Caco-2 (cell line): ENCODE measurements at regions of chr11 and their contacts with region 1.

Region 1: GRCh38 chr11:121655537-121656327 is 203.0 kb upstream of the SORL1-AS1 start:
- DNase-seq: peak; percentile 83 to 92
- H3K4me3 ChIP-seq: peak overlapping the region; percentile 37
- H3K4me3 Mint-ChIP-seq: peak overlapping the region; percentile 72
- H3K27ac Mint-ChIP-seq: peak overlapping the region; percentile 8
- H3K4me1 ChIP-seq: peaks cover 12% of the 10 kb centered on the region; the same call in 1 of the 2 replicates
- H3K4me1 Mint-ChIP-seq: no peaks in the 10 kb centered on the region
- H3K27me3 ChIP-seq: no peaks in the 10 kb centered on the region
- H3K27me3 Mint-ChIP-seq: peaks cover 25% of the 10 kb centered on the region
- CTCF ChIP-seq: peak; percentile 87 to 99

Region 2: DNA sequence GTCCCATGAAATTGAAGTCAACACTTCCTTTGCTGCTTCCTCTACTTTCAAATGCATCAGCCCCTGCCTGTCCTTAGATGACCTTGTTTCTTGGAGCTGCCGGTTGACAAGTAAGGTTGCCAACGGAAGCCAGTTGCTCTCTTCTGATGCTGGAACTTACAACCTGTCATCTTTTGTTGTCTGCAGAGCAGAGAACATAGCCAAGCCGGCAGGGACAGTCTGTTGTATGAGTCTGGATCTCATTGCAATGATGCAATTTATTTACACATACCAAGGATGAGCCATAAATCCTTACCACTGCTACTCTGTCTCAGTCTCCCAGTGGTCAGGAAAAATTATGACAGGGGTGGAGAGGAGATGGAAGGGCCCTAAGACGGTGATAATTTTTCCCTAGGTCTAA is 308.9 kb after region 1 on chr11:
- CTCF ChIA-PET with region 1: no interaction called
- POLR2A ChIA-PET with region 1: no interaction called
- intact Hi-C with region 1: loop called (anchors 1 kb)
- DNase-seq: peak in 1 of 2 experiments; percentile 14
- H3K4me3 ChIP-seq: no peak overlapping the region
- H3K4me3 Mint-ChIP-seq: no peak overlapping the region
- H3K27ac Mint-ChIP-seq: no peak overlapping the region
- H3K4me1 ChIP-seq: no peaks in the 10 kb centered on the region
- H3K4me1 Mint-ChIP-seq: no peaks in the 10 kb centered on the region
- H3K27me3 ChIP-seq: no peaks in the 10 kb centered on the region
- H3K27me3 Mint-ChIP-seq: peaks cover 12% of the 10 kb centered on the region
- CTCF ChIP-seq: no peak

Region 3: GRCh38 chr11:122101625-122102291 is 446.0 kb after region 1 on chr11:
- CTCF ChIA-PET with region 1: no interaction called
- POLR2A ChIA-PET with region 1: no interaction called
- intact Hi-C with region 1: loop called (anchors 1 kb)
- DNase-seq: peak in 1 of 2 experiments; percentile 24
- H3K4me3 ChIP-seq: no peak overlapping the region
- H3K4me3 Mint-ChIP-seq: no peak overlapping the region
- H3K27ac Mint-ChIP-seq: no peak overlapping the region
- H3K4me1 ChIP-seq: no peaks in the 10 kb centered on the region
- H3K4me1 Mint-ChIP-seq: no peaks in the 10 kb centered on the region
- H3K27me3 ChIP-seq: peaks cover 2% of the 10 kb centered on the region
- H3K27me3 Mint-ChIP-seq: peaks cover 37% of the 10 kb centered on the region
- CTCF ChIP-seq: peak in 1 of 2 experiments; percentile 34

Region 4: GRCh38 chr11:122202951-122203456 is 547.3 kb after region 1 on chr11:
- CTCF ChIA-PET with region 1: interaction called, 11 read pairs
- POLR2A ChIA-PET with region 1: no interaction called
- intact Hi-C with region 1: loop called (anchors 1 kb)
- DNase-seq: peak; percentile 59 to 82
- H3K4me3 ChIP-seq: no peak overlapping the region
- H3K4me3 Mint-ChIP-seq: peak overlapping the region; percentile 43
- H3K27ac Mint-ChIP-seq: no peak overlapping the region
- H3K4me1 ChIP-seq: peaks cover 9% of the 10 kb centered on the region
- H3K4me1 Mint-ChIP-seq: peaks cover 9% of the 10 kb centered on the region
- H3K27me3 ChIP-seq: peaks cover 2% of the 10 kb centered on the region
- H3K27me3 Mint-ChIP-seq: peaks cover 29% of the 10 kb centered on the region
- CTCF ChIP-seq: peak; percentile 98 to 99

Region 5: GRCh38 chr11:122505304-122506006 is 849.7 kb after region 1 on chr11:
- CTCF ChIA-PET with region 1: interaction called, 6 read pairs
- POLR2A ChIA-PET with region 1: no interaction called
- intact Hi-C with region 1: loop called (anchors 1 kb)
- DNase-seq: peak; percentile 76 to 86
- H3K4me3 ChIP-seq: no peak overlapping the region
- H3K4me3 Mint-ChIP-seq: no peak overlapping the region
- H3K27ac Mint-ChIP-seq: no peak overlapping the region
- H3K4me1 ChIP-seq: no peaks in the 10 kb centered on the region
- H3K4me1 Mint-ChIP-seq: no peaks in the 10 kb centered on the region
- H3K27me3 ChIP-seq: no peaks in the 10 kb centered on the region; the same call in 1 of the 2 replicates
- H3K27me3 Mint-ChIP-seq: peaks cover 28% of the 10 kb centered on the region
- CTCF ChIP-seq: peak; percentile 94 to 98